Gastrocnemius medialis (tissue), 4 donors: ENCODE measurements at regions of chr17 and their contacts with region 1.

Region 1: GRCh38 chr17:75667021-75667790 is at the starts of genes RECQL5 and SAP30BP:
- DNase-seq: peak; percentile 96
- ATAC-seq: peak; percentile 100
- H3K4me3 ChIP-seq: peak within 1 kb of the TSS; percentile 84 to 98 (median 89)
- H3K27ac ChIP-seq: peak within 1 kb of the TSS; percentile 83 to 88 (median 84)
- H3K4me1 ChIP-seq: peaks cover 20 to 21% of the 10 kb centered on the region in 2 donors
- H3K27me3 ChIP-seq: no peaks in the 10 kb centered on the region
- CTCF ChIP-seq: peak in 1 of 5 experiments; percentile 19
- POLR2A ChIP-seq: peak; percentile 75 to 87
- total RNA-seq, gene RECQL5: 5.3 to 17.5 (median 7.4) TPM
- total RNA-seq, gene SAP30BP: 42.0 to 64.0 (median 50.1) TPM

Region 2: GRCh38 chr17:75632863-75633485 is 34.2 kb before region 1 on chr17 and contains the start of gene SMIM5:
- in situ Hi-C with region 1: no loop called
- intact Hi-C with region 1: loop called (anchors 2 kb)
- DNase-seq: peak; percentile 63 to 81
- ATAC-seq: peak; percentile 72 to 75
- H3K4me3 ChIP-seq: peak within 1 kb of the TSS in 3 of 4 donors; percentile 4 to 35 (median 12)
- H3K27ac ChIP-seq: peak within 1 kb of the TSS; percentile 70 to 84 (median 76)
- H3K4me1 ChIP-seq: peaks cover 38 to 39% of the 10 kb centered on the region in 2 donors
- H3K27me3 ChIP-seq: no peaks in the 10 kb centered on the region
- CTCF ChIP-seq: peak; percentile 90 to 98 (median 96)
- POLR2A ChIP-seq: peak in 1 of 2 donors; percentile 8
- total RNA-seq, gene SMIM5: 0.22 TPM in 1 of 4 donors, not detected in the others